ENCODE measurements at regions of chr1 and their contacts with region 1.

Region 1: GRCh38 chr1:222892137-222892769 is 77.4 kb downstream of the DISP1 start:
- DNase-seq: peak; percentile 85
- H3K4me3 ChIP-seq: no peak overlapping the region
- H3K27ac ChIP-seq: peak overlapping the region; percentile 40
- H3K4me1 ChIP-seq: peaks cover 25% of the 10 kb centered on the region
- H3K27me3 ChIP-seq: no peaks in the 10 kb centered on the region
- CTCF ChIP-seq: no peak
- POLR2A ChIP-seq: no peak

Region 2: GRCh38 chr1:222814536-222815439 is 77.5 kb before region 1 on chr1 and contains the start of gene DISP1:
- CTCF ChIA-PET with region 1: no interaction called
- POLR2A ChIA-PET with region 1: no interaction called
- dilution Hi-C with region 1: no loop called
- intact Hi-C with region 1: loop called (anchors 2 kb)
- DNase-seq: peak; percentile 65
- H3K4me3 ChIP-seq: peak within 1 kb of the TSS; percentile 41 to 84 (median 70)
- H3K27ac ChIP-seq: peak within 1 kb of the TSS; percentile 70
- H3K4me1 ChIP-seq: peaks cover 25% of the 10 kb centered on the region
- H3K27me3 ChIP-seq: no peaks in the 10 kb centered on the region
- CTCF ChIP-seq: no peak
- POLR2A ChIP-seq: peak; percentile 44
- total RNA-seq, gene DISP1: 2.4 and 3.9 TPM in 2 replicates

Region 3: DNA sequence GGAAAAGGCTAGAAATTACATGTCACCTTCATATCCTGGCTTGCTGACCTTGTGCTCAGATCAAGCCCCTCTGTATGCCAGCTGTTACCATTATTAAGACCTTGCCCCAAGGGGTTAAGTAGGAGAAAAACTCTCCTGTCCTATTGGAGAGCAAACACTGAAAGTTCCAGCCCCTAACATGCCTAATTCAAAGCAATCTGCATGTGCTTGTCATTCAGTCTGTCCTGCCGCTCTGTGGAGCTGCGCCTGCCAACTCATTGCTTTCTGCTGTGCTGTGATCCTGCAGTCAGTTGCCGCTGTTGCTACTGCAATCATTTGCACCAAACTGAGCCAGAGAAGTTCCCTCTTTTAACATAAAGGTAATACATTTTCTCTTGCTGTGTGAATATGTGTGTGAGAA is 36.0 kb after region 1 on chr1:
- CTCF ChIA-PET with region 1: no interaction called
- POLR2A ChIA-PET with region 1: no interaction called
- dilution Hi-C with region 1: no loop called
- intact Hi-C with region 1: no loop called
- DNase-seq: peak; percentile 52
- H3K4me3 ChIP-seq: no peak overlapping the region
- H3K27ac ChIP-seq: no peak overlapping the region
- H3K4me1 ChIP-seq: no peaks in the 10 kb centered on the region
- H3K27me3 ChIP-seq: no peaks in the 10 kb centered on the region
- CTCF ChIP-seq: no peak
- POLR2A ChIP-seq: no peak

Measured in endothelial cell of umbilical vein (primary cell).